Calu3 (cell line): ENCODE measurements at regions of chr4 and their contacts with region 1.

Region 1: GRCh38 chr4:76061982-76062381 is 12.5 kb upstream of the ART3 start:
- DNase-seq: no peak
- H3K4me3 Mint-ChIP-seq: no peak overlapping the region
- H3K27ac Mint-ChIP-seq: no peak overlapping the region
- H3K4me1 Mint-ChIP-seq: peaks cover 35% of the 10 kb centered on the region
- H3K27me3 Mint-ChIP-seq: no peaks in the 10 kb centered on the region
- CTCF ChIP-seq: no peak

Region 2: GRCh38 chr4:76007094-76007862 is 54.7 kb before region 1 on chr4 and contains the start of gene CXCL9:
- CTCF ChIA-PET with region 1: no interaction called
- intact Hi-C with region 1: loop called (anchors 2 kb)
- DNase-seq: no peak
- H3K4me3 Mint-ChIP-seq: no peak within 1 kb of the TSS
- H3K27ac Mint-ChIP-seq: no peak within 1 kb of the TSS
- H3K4me1 Mint-ChIP-seq: peaks cover 21% of the 10 kb centered on the region
- H3K27me3 Mint-ChIP-seq: no peaks in the 10 kb centered on the region
- CTCF ChIP-seq: no peak
- total RNA-seq, gene CXCL9: not detected in 2 replicates